GM12878 (cell line): ENCODE measurements at regions of chr1 and their contacts with region 1.

Region 1: GRCh38 chr1:234610348-234611152 is 572 bp upstream of the IRF2BP2 start:
- DNase-seq: peak; percentile 75
- ATAC-seq: peak; percentile 54
- H3K4me3 ChIP-seq: peak overlapping the region; percentile 74
- H3K27ac ChIP-seq: peak overlapping the region; percentile 98
- H3K4me1 ChIP-seq: peaks cover 24% of the 10 kb centered on the region
- H3K27me3 ChIP-seq: no peaks in the 10 kb centered on the region
- CTCF ChIP-seq: no peak
- EP300 ChIP-seq: no peak; a peak in 2 of 4 replicates
- POLR2A ChIP-seq: peak; percentile 97
- RAD21 ChIP-seq: no peak

Region 2: DNA sequence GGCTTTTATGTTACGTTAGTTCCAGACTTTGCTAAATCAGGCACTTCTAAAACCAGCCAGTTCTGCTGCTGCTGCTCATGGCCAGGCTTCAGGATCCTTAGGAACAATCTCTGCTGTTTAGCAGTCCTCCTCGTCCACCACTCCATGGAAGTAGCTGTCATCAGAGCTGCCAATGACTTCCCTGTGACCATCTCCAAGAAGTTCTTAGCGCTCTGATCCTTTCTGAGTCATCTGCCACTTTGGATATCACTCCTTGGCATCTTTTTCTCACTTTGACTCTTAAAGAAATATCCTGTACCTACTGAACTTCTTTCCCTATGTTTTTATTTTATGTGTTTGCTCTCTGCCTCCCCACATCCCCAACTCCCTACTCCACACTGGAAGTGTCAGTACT is 14.2 kb after region 1 on chr1:
- CTCF ChIA-PET with region 1: interaction called, 4 read pairs
- POLR2A ChIA-PET with region 1: interaction called, 13 read pairs
- RAD21 ChIA-PET with region 1: interaction called, 4 read pairs
- SMC1A ChIA-PET with region 1: interaction called, 16 read pairs
- in situ Hi-C with region 1: no loop called
- intact Hi-C with region 1: no loop called
- DNase-seq: no peak
- ATAC-seq: no peak
- H3K4me3 ChIP-seq: no peak overlapping the region
- H3K27ac ChIP-seq: no peak overlapping the region
- H3K4me1 ChIP-seq: peaks cover 4% of the 10 kb centered on the region; the same call in 1 of the 2 replicates
- H3K27me3 ChIP-seq: no peaks in the 10 kb centered on the region
- CTCF ChIP-seq: no peak
- EP300 ChIP-seq: no peak
- POLR2A ChIP-seq: no peak
- RAD21 ChIP-seq: no peak

Region 3: GRCh38 chr1:234676103-234676594 is 65.6 kb after region 1 on chr1:
- CTCF ChIA-PET with region 1: no interaction called
- POLR2A ChIA-PET with region 1: interaction called, 7 read pairs
- RAD21 ChIA-PET with region 1: interaction called, 6 read pairs
- SMC1A ChIA-PET with region 1: interaction called, 15 read pairs
- in situ Hi-C with region 1: no loop called
- intact Hi-C with region 1: loop called (anchors 5 kb)
- DNase-seq: no peak
- ATAC-seq: peak; percentile 94
- H3K4me3 ChIP-seq: peak overlapping the region; percentile 44
- H3K27ac ChIP-seq: peak overlapping the region; percentile 33
- H3K4me1 ChIP-seq: peaks cover 13% of the 10 kb centered on the region
- H3K27me3 ChIP-seq: no peaks in the 10 kb centered on the region
- CTCF ChIP-seq: no peak
- EP300 ChIP-seq: no peak
- POLR2A ChIP-seq: no peak
- RAD21 ChIP-seq: no peak

Region 4: DNA sequence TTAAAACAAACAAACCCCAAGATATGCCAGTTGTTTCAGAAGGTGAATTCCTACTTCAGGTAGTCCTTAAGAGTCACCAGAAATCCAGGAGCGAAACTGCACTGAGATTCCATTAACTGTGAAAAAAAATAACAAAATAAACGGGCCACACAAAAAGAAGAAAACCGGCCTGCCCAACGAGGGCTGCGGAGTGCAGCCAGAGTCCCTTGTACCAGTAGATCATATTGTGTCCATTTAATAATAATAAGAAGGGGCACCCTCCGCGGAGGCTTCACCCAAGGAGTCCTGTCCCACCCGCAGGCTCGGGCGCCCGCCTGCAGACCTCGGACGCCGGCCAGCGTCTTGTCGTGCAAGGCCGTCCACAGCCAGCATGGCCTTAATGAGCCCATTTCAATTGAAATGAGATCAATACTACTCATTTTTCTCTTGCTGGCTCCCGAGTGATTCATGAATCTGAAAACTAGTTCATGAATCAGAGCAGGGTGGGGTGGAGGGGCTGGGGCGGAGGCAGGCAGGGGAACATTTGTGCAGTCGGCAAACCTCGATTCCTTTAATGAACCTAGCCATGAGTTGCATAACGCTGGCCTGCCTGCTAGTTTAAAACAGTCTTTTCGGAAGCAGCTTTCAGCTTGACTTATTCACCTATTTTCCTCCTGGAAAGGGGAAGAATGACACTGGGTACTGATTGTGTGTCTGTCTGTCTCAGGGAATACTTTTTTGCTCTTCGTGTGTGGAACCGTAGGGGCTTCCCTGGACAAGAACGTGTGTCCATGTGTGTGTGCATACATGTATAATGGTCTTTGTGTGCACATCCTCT is 112.6 kb after region 1 on chr1:
- CTCF ChIA-PET with region 1: interaction called, 10 read pairs
- POLR2A ChIA-PET with region 1: interaction called, 73 read pairs
- RAD21 ChIA-PET with region 1: interaction called, 128 read pairs
- SMC1A ChIA-PET with region 1: interaction called, 137 read pairs
- in situ Hi-C with region 1: loop called (anchors 5 kb)
- intact Hi-C with region 1: loop called (anchors 1 kb)
- DNase-seq: no peak
- ATAC-seq: no peak
- H3K4me3 ChIP-seq: no peak overlapping the region
- H3K27ac ChIP-seq: peak overlapping the region; percentile 94
- H3K4me1 ChIP-seq: peaks cover 49% of the 10 kb centered on the region
- H3K27me3 ChIP-seq: no peaks in the 10 kb centered on the region
- CTCF ChIP-seq: no peak
- EP300 ChIP-seq: no peak
- POLR2A ChIP-seq: no peak
- RAD21 ChIP-seq: no peak

Region 5: GRCh38 chr1:234881893-234882771 is 271.6 kb after region 1 on chr1:
- CTCF ChIA-PET with region 1: interaction called, 7 read pairs
- POLR2A ChIA-PET with region 1: interaction called, 6 read pairs
- RAD21 ChIA-PET with region 1: interaction called, 10 read pairs
- SMC1A ChIA-PET with region 1: interaction called, 9 read pairs
- in situ Hi-C with region 1: no loop called
- intact Hi-C with region 1: loop called (anchors 2 kb)
- DNase-seq: peak; percentile 83
- ATAC-seq: peak; percentile 88
- H3K4me3 ChIP-seq: peak overlapping the region; percentile 53
- H3K27ac ChIP-seq: peak overlapping the region; percentile 73
- H3K4me1 ChIP-seq: peaks cover 50% of the 10 kb centered on the region
- H3K27me3 ChIP-seq: no peaks in the 10 kb centered on the region
- CTCF ChIP-seq: no peak
- EP300 ChIP-seq: peak; percentile 90 to 94
- POLR2A ChIP-seq: no peak
- RAD21 ChIP-seq: no peak

Region 6: GRCh38 chr1:234963180-234963903 is 352.8 kb after region 1 on chr1:
- CTCF ChIA-PET with region 1: interaction called, 5 read pairs
- POLR2A ChIA-PET with region 1: interaction called, 7 read pairs
- RAD21 ChIA-PET with region 1: interaction called, 14 read pairs
- SMC1A ChIA-PET with region 1: interaction called, 19 read pairs
- in situ Hi-C with region 1: no loop called
- intact Hi-C with region 1: loop called (anchors 1 kb)
- DNase-seq: peak; percentile 97
- ATAC-seq: peak; percentile 79
- H3K4me3 ChIP-seq: peak overlapping the region; percentile 45; the same call in 1 of the 2 replicates
- H3K27ac ChIP-seq: peak overlapping the region; percentile 96
- H3K4me1 ChIP-seq: peaks cover 59% of the 10 kb centered on the region
- H3K27me3 ChIP-seq: no peaks in the 10 kb centered on the region
- CTCF ChIP-seq: no peak
- EP300 ChIP-seq: peak; percentile 95 to 99
- POLR2A ChIP-seq: no peak
- RAD21 ChIP-seq: 0 out of 2 replicates have a peak, but pooled peaks have one; percentile 24

Region 7: GRCh38 chr1:235011599-235012435 is 401.3 kb after region 1 on chr1:
- CTCF ChIA-PET with region 1: interaction called, 3 read pairs
- POLR2A ChIA-PET with region 1: interaction called, 4 read pairs
- RAD21 ChIA-PET with region 1: interaction called, 30 read pairs
- SMC1A ChIA-PET with region 1: interaction called, 4 read pairs
- in situ Hi-C with region 1: no loop called
- intact Hi-C with region 1: loop called (anchors 1 kb)
- DNase-seq: peak; percentile 100
- ATAC-seq: peak; percentile 75
- H3K4me3 ChIP-seq: peak overlapping the region; percentile 46; the same call in 1 of the 2 replicates
- H3K27ac ChIP-seq: peak overlapping the region; percentile 99
- H3K4me1 ChIP-seq: peaks cover 86% of the 10 kb centered on the region
- H3K27me3 ChIP-seq: no peaks in the 10 kb centered on the region
- CTCF ChIP-seq: no peak
- EP300 ChIP-seq: peak; percentile 100
- POLR2A ChIP-seq: peak; percentile 81
- RAD21 ChIP-seq: peak; percentile 30